Activated CD4-positive, alpha-beta T cell treated with anti-CD3 and anti-CD28 coated beads, Interleukin-2, amount 10 ng/mL, durations not matched to agents 7 days and 5 days (primary cell): ENCODE measurements at regions of chr17 and their contacts with region 1.

Region 1: GRCh38 chr17:40340880-40341807 is 23.4 kb downstream of the GJD3 start:
- DNase-seq: peak; percentile 89
- H3K4me3 Mint-ChIP-seq: peak overlapping the region; percentile 69
- H3K27ac Mint-ChIP-seq: peak overlapping the region; percentile 94
- H3K4me1 Mint-ChIP-seq: peaks cover 83% of the 10 kb centered on the region
- H3K27me3 Mint-ChIP-seq: no peaks in the 10 kb centered on the region

Region 2: GRCh38 chr17:40317880-40318829 is 23.0 kb before region 1 on chr17:
- CTCF ChIA-PET with region 1: interaction called, 47 read pairs
- POLR2A ChIA-PET with region 1: no interaction called
- DNase-seq: peak; percentile 93
- H3K4me3 Mint-ChIP-seq: peak overlapping the region; percentile 99
- H3K27ac Mint-ChIP-seq: peak overlapping the region; percentile 96
- H3K4me1 Mint-ChIP-seq: peaks cover 64% of the 10 kb centered on the region
- H3K27me3 Mint-ChIP-seq: no peaks in the 10 kb centered on the region

Region 3: GRCh38 chr17:40326014-40326831 is 14.9 kb before region 1 on chr17:
- CTCF ChIA-PET with region 1: interaction called, 47 read pairs
- POLR2A ChIA-PET with region 1: no interaction called
- DNase-seq: peak; percentile 70
- H3K4me3 Mint-ChIP-seq: peak overlapping the region; percentile 80
- H3K27ac Mint-ChIP-seq: peak overlapping the region; percentile 96
- H3K4me1 Mint-ChIP-seq: peaks cover 83% of the 10 kb centered on the region
- H3K27me3 Mint-ChIP-seq: no peaks in the 10 kb centered on the region